ENCODE measurements at regions of chr21 and their contacts with region 1.

Region 1: GRCh38 chr21:45287438-45288391 is at the start of gene POFUT2:
- DNase-seq: peak; percentile 99
- H3K4me3 ChIP-seq: peak within 1 kb of the TSS; percentile 75 to 92 (median 87)
- H3K27ac ChIP-seq: peak within 1 kb of the TSS; percentile 86 to 93 (median 90)
- H3K4me1 ChIP-seq: peaks cover 14 to 28% (median 20%) of the 10 kb centered on the region in 4 donors
- H3K27me3 ChIP-seq: no peaks in the 10 kb centered on the region
- CTCF ChIP-seq: no peak
- EP300 ChIP-seq: no peak
- POLR2A ChIP-seq: peak; percentile 88
- total RNA-seq, gene POFUT2: 29.9 to 79.3 (median 33.3) TPM

Region 2: GRCh38 chr21:45248184-45248892 is 39.4 kb before region 1 on chr21:
- in situ Hi-C with region 1: no loop called
- intact Hi-C with region 1: no loop called
- DNase-seq: no peak
- H3K4me3 ChIP-seq: peak overlapping the region in 1 of 4 donors; percentile 30
- H3K27ac ChIP-seq: peak overlapping the region in 2 of 4 donors; percentile 34 to 50
- H3K4me1 ChIP-seq: peaks cover 0 to 9% (median 5%) of the 10 kb centered on the region in 4 donors
- H3K27me3 ChIP-seq: peaks cover 16% of the 10 kb centered on the region
- CTCF ChIP-seq: no peak
- EP300 ChIP-seq: no peak
- POLR2A ChIP-seq: no peak

Region 3: GRCh38 chr21:45270306-45270821 is 17.4 kb before region 1 on chr21:
- in situ Hi-C with region 1: no loop called
- intact Hi-C with region 1: no loop called
- DNase-seq: peak; percentile 3
- H3K4me3 ChIP-seq: no peak overlapping the region
- H3K27ac ChIP-seq: no peak overlapping the region
- H3K4me1 ChIP-seq: no peaks in the 10 kb centered on the region
- H3K27me3 ChIP-seq: no peaks in the 10 kb centered on the region
- CTCF ChIP-seq: no peak
- EP300 ChIP-seq: no peak
- POLR2A ChIP-seq: no peak

Region 4: GRCh38 chr21:45341779-45342178 is 54.1 kb after region 1 on chr21:
- in situ Hi-C with region 1: no loop called
- intact Hi-C with region 1: no loop called
- DNase-seq: no peak
- H3K4me3 ChIP-seq: no peak overlapping the region
- H3K27ac ChIP-seq: no peak overlapping the region
- H3K4me1 ChIP-seq: no peaks in the 10 kb centered on the region
- H3K27me3 ChIP-seq: no peaks in the 10 kb centered on the region
- CTCF ChIP-seq: no peak
- EP300 ChIP-seq: no peak
- POLR2A ChIP-seq: no peak

Region 5: DNA sequence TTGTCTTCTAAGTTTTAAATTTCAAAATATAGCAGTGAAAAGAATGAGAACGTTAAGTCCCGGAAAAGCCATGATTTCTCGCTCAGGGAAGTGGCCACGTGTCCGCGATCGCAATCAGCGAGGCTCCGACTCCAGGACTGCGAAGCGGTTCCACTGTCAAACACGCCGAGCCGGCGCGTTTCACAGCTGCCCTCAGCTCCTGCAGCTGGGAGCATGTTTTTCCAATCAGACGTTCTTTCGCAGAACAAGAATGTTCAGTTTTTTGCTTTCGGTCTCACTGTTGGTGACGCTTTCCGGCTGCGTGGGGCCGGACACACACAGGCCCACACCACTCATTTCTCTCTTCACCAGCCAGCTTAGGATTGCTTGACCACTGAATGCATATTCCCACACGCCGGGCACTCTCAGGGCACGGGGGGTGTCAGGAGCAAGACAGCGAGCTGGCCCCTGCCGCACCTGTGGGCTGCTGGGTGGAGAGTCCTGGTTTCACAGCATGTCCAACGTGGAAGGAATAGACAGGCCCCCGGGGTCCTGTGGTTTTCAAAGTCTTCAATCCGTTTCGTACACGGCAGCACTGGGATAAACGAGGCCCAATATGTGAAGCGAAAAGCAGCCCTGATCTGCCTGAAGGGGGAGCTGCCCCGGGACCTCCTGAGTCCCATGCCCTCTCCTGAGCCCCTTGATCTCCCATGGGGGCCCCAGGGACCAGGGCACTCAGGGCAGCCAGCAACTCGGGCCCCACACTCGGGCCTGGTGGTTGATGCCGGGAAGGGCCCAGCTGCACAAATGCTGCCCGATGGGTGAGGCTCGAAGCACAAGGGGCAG is 69.9 kb after region 1 on chr21:
- in situ Hi-C with region 1: loop called in 1 of 4 experiments (anchors 10 kb)
- intact Hi-C with region 1: no loop called
- DNase-seq: peak; percentile 24
- H3K4me3 ChIP-seq: no peak overlapping the region
- H3K27ac ChIP-seq: peak overlapping the region; percentile 43 to 69 (median 57)
- H3K4me1 ChIP-seq: peaks cover 0 to 3% (median 0%) of the 10 kb centered on the region in 4 donors
- H3K27me3 ChIP-seq: no peaks in the 10 kb centered on the region
- CTCF ChIP-seq: no peak
- EP300 ChIP-seq: no peak
- POLR2A ChIP-seq: no peak

Region 6: GRCh38 chr21:45439161-45439872 is 151.6 kb after region 1 on chr21:
- in situ Hi-C with region 1: loop called in 1 of 4 experiments (anchors 25 kb)
- intact Hi-C with region 1: loop called (anchors 1 kb)
- DNase-seq: peak; percentile 83
- H3K4me3 ChIP-seq: peak overlapping the region in 2 of 4 donors; percentile 19 to 41
- H3K27ac ChIP-seq: peak overlapping the region; percentile 65 to 73 (median 70)
- H3K4me1 ChIP-seq: peaks cover 0 to 13% (median 8%) of the 10 kb centered on the region in 4 donors
- H3K27me3 ChIP-seq: no peaks in the 10 kb centered on the region
- CTCF ChIP-seq: peak; percentile 97 to 98 (median 98)
- EP300 ChIP-seq: peak; percentile 63
- POLR2A ChIP-seq: no peak

Region 7: DNA sequence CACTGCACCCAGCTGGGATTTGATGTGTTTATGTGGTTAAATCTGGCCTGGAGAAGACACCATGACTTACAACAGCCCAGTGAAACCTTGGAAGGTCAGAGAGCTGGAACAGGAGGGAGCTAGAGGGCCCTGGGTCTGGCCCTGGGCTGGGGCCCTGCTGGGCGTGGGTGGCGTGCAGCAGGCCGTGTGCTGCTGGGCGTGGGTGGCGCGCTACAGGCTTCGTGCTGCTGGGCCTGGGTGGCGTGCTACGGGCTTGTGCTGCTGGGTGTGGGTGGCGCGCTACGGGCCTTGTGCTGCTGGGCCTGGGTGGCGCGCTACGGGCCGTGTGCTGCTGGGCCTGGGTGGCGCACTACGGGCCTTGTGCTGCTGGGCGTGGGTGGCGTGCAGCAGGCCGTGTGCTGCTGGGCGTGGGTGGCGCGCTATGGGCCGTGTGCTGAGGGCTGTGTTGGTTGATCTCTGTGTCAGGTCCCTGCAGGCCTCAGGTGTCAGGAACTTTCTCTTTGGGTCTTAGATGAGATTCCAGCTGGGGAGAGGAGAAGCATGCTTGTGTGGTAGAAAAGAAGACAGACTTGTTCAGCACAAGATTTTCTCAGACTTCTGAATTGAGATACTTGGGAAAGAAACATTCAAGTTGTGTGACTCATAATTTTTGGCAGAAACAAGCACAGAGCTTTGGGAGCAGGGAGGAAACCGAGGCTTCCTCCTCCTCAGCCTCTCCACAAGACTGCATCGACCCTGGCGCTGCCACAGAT is 183.2 kb after region 1 on chr21:
- in situ Hi-C with region 1: loop called in 1 of 4 experiments (anchors 25 kb)
- intact Hi-C with region 1: no loop called
- DNase-seq: no peak
- H3K4me3 ChIP-seq: no peak overlapping the region
- H3K27ac ChIP-seq: peak overlapping the region; percentile 77 to 86 (median 81)
- H3K4me1 ChIP-seq: peaks cover 6 to 33% (median 13%) of the 10 kb centered on the region in 4 donors
- H3K27me3 ChIP-seq: no peaks in the 10 kb centered on the region
- CTCF ChIP-seq: no peak
- EP300 ChIP-seq: no peak
- POLR2A ChIP-seq: no peak

Measured in transverse colon (tissue), 4 donors.